Naive thymus-derived CD4-positive, alpha-beta T cell (primary cell): ENCODE measurements at regions of chr7 and their contacts with region 1.

Region 1: DNA sequence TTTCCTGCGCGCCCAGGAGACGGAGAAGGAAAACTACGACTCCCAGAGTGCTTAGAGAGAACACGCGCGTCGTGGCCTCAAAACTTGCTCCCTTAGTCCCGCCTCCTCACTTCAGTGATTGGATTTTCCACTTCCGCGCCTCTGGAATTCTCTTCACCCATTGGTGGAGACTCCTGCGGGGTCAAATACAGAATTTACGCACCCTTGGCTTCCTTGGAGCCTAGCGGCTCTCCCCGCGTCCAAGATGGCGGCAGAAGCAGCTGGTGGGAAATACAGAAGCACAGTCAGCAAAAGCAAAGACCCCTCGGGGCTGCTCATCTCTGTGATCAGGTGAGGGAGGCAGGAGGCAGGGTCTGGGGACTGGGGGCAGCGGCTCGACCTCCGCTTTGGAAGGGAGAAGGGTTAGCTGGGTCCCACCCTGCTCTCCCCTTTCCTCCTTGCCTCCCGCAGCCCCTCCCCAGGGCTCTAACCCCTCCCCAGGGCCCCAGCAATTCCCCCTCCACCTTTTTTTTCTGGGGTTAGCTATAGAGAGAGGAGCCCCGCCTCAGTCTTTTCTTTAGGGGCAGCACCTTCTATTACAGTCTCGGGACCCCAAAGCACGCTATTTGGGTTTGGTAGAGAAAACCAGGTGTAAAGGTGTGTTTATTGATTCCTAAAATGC is at the start of gene EXOC4:
- DNase-seq: peak; percentile 66 to 97 (median 95)
- ATAC-seq: peak; percentile 100
- H3K4me3 ChIP-seq: peak within 1 kb of the TSS; percentile 87
- H3K4me3 Mint-ChIP-seq: peak within 1 kb of the TSS; percentile 85 to 99 (median 96)
- H3K27ac ChIP-seq: peak within 1 kb of the TSS; percentile 93
- H3K27ac Mint-ChIP-seq: peak within 1 kb of the TSS; percentile 94 to 98 (median 96)
- H3K4me1 ChIP-seq: peaks cover 4 to 7% of the 10 kb centered on the region in 2 donors
- H3K4me1 Mint-ChIP-seq: peaks cover 22 to 45% (median 40%) of the 10 kb centered on the region in 7 donors
- H3K27me3 ChIP-seq: no peaks in the 10 kb centered on the region
- H3K27me3 Mint-ChIP-seq: peaks cover 0 to 9% (median 0%) of the 10 kb centered on the region in 5 donors
- total RNA-seq, gene EXOC4: 65.4 to 106 (median 82.9) TPM

Region 2: DNA sequence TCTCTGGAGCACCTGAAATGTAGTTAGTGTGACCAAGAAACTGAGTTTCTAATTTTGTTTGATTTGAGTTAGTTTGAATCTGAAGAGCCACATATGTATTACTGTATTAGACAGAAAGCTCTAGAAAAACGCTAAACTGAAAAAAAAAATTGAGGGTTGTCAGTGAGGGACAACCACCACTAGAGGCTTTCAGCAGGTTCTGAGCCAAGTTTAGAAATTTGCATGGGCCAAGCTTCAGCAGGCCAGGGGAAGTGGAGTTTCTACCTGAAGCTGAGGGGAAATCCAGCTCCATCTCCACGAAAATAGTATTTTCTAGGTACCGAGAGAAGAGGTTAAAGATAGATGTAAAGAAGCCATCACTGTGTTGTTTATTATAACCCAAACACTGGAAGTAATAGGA is 598.8 kb before region 1 on chr7:
- CTCF ChIA-PET with region 1: no interaction called
- POLR2A ChIA-PET with region 1: no interaction called
- intact Hi-C with region 1: loop called (anchors 5 to 10 kb)
- DNase-seq: peak in 4 of 9 donors; percentile 23 to 32 (median 26)
- ATAC-seq: peak; percentile 48
- H3K4me3 ChIP-seq: no peak overlapping the region
- H3K4me3 Mint-ChIP-seq: peak overlapping the region in 8 of 10 donors; percentile 44 to 75 (median 54)
- H3K27ac ChIP-seq: no peak overlapping the region
- H3K27ac Mint-ChIP-seq: peak overlapping the region in 5 of 9 donors; percentile 6 to 92 (median 84)
- H3K4me1 ChIP-seq: peaks cover 14 to 21% of the 10 kb centered on the region in 2 donors
- H3K4me1 Mint-ChIP-seq: peaks cover 19 to 57% (median 45%) of the 10 kb centered on the region in 7 donors
- H3K27me3 ChIP-seq: no peaks in the 10 kb centered on the region
- H3K27me3 Mint-ChIP-seq: no peaks in the 10 kb centered on the region

Region 3: GRCh38 chr7:134126966-134127848 is 874.2 kb after region 1 on chr7 and contains the start of gene LRGUK:
- CTCF ChIA-PET with region 1: no interaction called
- POLR2A ChIA-PET with region 1: no interaction called
- intact Hi-C with region 1: loop called (anchors 1 kb)
- DNase-seq: peak; percentile 55 to 82 (median 77)
- ATAC-seq: peak; percentile 100
- H3K4me3 ChIP-seq: peak within 1 kb of the TSS; percentile 93
- H3K4me3 Mint-ChIP-seq: peak within 1 kb of the TSS; percentile 80 to 96 (median 88)
- H3K27ac ChIP-seq: no peak within 1 kb of the TSS
- H3K27ac Mint-ChIP-seq: peak within 1 kb of the TSS in 3 of 9 donors; percentile 16 to 65 (median 46)
- H3K4me1 ChIP-seq: peaks cover 3 to 9% of the 10 kb centered on the region in 2 donors
- H3K4me1 Mint-ChIP-seq: peaks cover 15 to 26% (median 18%) of the 10 kb centered on the region in 7 donors
- H3K27me3 ChIP-seq: no peaks in the 10 kb centered on the region
- H3K27me3 Mint-ChIP-seq: peaks cover 20 to 44% (median 23%) of the 10 kb centered on the region in 5 donors
- total RNA-seq, gene LRGUK: 0.22 to 1.0 (median 0.43) TPM

Region 4: DNA sequence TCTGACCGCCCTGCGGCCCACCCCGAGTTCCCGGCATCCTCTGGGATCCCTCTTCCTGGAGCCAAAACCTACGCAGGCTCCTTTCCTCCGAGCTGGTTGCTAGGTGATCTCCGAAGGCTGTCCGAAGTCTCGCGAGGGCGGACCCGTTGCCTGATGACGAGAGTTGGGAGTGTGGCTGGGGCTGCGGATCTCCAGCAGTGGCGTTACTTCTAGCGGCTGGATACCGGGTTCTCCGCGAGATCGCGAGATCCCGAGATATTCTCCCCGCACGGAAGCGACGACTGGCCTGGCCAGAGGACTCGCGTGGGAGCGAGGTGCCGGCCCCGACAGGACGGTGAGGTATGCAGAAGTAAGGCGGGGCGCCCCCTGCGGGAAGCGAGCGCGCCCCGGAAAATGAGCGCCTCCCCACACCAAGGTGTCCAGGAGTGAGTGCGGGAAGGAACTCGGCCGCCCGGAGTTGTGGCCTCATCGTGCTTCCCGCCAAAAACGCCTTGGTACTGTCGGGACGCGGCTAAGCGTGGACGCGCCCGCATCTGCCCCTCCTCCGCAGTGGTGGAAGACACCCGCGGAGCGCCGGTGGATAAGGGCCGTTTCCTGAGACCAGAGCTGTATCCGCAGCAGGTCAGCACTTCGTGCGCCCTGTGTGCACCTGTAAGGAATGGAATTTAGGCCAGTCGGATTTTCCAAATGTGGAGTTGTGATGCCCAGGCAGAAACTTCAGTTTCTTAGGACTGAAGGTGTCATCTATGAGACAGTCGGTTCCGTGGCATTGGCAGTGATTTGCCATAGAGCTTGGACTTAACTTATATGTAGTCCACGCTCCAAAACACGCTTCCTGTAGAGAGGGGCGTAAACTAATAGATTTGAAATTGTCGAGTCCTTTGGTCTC is 1733.6 kb after region 1 on chr7 and contains the start of gene AGBL3:
- CTCF ChIA-PET with region 1: no interaction called
- POLR2A ChIA-PET with region 1: no interaction called
- intact Hi-C with region 1: loop called in 1 of 2 experiments (anchors 5 kb)
- DNase-seq: peak; percentile 80 to 92 (median 89)
- ATAC-seq: peak; percentile 94
- H3K4me3 ChIP-seq: peak within 1 kb of the TSS; percentile 92
- H3K4me3 Mint-ChIP-seq: peak within 1 kb of the TSS; percentile 93 to 100 (median 98)
- H3K27ac ChIP-seq: peak within 1 kb of the TSS; percentile 96
- H3K27ac Mint-ChIP-seq: peak within 1 kb of the TSS; percentile 97 to 100 (median 99)
- H3K4me1 ChIP-seq: no peaks in the 10 kb centered on the region
- H3K4me1 Mint-ChIP-seq: peaks cover 20 to 61% (median 52%) of the 10 kb centered on the region in 7 donors
- H3K27me3 ChIP-seq: no peaks in the 10 kb centered on the region
- H3K27me3 Mint-ChIP-seq: no peaks in the 10 kb centered on the region
- total RNA-seq, gene AGBL3: 2.1 to 6.6 (median 3.8) TPM